K562 (cell line): ENCODE measurements at regions of chr6 and their contacts with region 1.

Region 1: DNA sequence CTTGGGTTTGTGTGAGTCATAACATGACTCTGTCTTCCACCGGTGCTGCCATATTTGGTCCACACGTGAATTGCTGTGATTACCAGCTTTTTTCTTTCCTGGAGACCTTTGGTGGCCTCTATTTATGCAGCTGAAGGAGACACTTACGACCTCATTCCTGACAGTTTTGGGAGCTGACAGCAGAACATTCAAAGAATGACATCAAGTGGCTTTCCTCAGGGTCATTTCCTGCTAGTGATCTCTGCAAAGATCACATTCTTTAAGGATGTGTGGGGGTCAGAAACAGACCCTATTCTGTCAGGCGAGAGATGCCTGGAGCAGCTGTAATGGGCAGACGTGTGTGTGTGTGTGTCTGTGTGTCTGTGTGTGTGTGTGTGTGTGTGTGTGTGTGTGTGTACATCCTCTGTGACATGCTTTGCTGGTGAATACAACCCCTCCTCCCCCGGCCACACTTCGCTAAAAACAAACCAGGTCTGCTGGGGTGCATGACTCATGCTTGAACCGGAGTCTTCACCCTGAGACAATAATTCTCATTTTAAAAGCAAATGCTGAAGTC is 115.6 kb downstream of the TMEM170B start:
- DNase-seq: peak in 3 of 4 experiments; percentile 24 to 33 (median 30)
- ATAC-seq: no peak; the same call in 2 of the 3 replicates
- H3K4me3 ChIP-seq: no peak overlapping the region
- H3K27ac ChIP-seq: no peak overlapping the region
- H3K4me1 ChIP-seq: no peaks in the 10 kb centered on the region
- H3K27me3 ChIP-seq: peaks cover 25 to 48% of the 10 kb centered on the region in 2 experiments
- CTCF ChIP-seq: no peak
- EP300 ChIP-seq: no peak
- POLR2A ChIP-seq: no peak
- RAD21 ChIP-seq: no peak

Region 2: DNA sequence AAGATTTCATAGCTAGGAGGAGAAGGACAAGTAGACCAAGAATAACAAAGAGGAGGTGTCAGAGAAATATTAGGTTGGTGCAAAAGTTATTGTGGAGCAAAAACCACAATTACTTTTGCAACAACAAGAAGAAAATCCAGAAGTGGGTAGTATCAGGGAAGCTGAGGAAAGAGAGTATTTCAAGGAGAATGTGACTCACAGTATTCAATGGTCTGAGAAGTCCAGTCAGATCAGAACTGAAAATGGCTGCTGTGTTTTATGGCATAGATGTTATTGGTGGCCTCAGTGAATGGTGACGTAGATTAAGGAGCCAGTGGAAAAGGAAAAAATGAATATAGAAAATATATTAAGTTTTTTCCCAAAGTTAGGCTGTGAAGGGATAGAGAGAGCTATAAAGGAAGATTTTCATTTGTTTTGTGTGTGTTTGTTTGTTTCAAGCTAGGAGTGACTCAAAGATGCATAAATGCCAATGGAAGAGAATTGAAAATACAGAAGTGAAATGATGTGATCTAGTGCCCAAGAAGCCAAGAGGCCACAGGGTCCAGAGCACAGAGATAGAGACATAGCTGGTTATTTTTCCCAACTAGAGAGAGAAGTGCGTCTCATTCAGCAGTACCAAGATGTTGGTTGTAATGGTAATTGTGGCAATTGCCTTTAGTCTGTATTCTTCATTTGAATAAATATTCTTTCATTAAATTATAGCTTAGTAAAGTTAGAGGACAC is 12.7 kb after region 1 on chr6:
- CTCF ChIA-PET with region 1: no interaction called
- POLR2A ChIA-PET with region 1: interaction called, 12 read pairs
- in situ Hi-C with region 1: no loop called
- intact Hi-C with region 1: no loop called
- DNase-seq: no peak
- ATAC-seq: no peak
- H3K4me3 ChIP-seq: no peak overlapping the region
- H3K27ac ChIP-seq: no peak overlapping the region
- H3K4me1 ChIP-seq: no peaks in the 10 kb centered on the region
- H3K27me3 ChIP-seq: peaks cover 5% of the 10 kb centered on the region in 2 experiments; a peak in 4 of 5 replicates
- CTCF ChIP-seq: no peak
- EP300 ChIP-seq: no peak
- POLR2A ChIP-seq: no peak
- RAD21 ChIP-seq: no peak

Region 3: GRCh38 chr6:11744753-11745152 is 91.6 kb after region 1 on chr6:
- CTCF ChIA-PET with region 1: no interaction called
- POLR2A ChIA-PET with region 1: no interaction called
- in situ Hi-C with region 1: no loop called
- intact Hi-C with region 1: no loop called
- DNase-seq: no peak
- ATAC-seq: no peak
- H3K4me3 ChIP-seq: no peak overlapping the region
- H3K27ac ChIP-seq: no peak overlapping the region
- H3K4me1 ChIP-seq: peaks cover 0 to 3% of the 10 kb centered on the region in 2 experiments; a peak in 2 of 5 replicates
- H3K27me3 ChIP-seq: no peaks in the 10 kb centered on the region
- CTCF ChIP-seq: no peak
- EP300 ChIP-seq: no peak
- POLR2A ChIP-seq: no peak
- RAD21 ChIP-seq: no peak

Region 4: DNA sequence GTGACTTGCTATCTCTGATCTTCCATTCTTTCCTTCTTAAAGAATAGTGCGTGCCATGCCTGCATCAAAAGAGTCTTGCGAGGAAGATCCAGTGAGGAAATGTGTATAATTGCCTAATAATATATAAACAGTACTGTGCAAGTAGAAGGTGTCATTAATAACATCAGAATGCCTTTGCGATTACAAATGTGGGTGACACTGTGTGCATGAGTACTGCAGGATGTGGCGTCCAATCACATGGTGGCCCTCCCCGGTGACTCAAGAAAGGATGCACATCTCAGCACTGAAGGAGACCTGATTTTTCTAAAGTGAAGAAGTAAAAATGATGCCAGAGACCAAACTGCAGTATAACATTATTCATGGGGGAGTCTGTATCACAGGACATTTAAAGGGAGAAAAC is 529.6 kb after region 1 on chr6:
- CTCF ChIA-PET with region 1: interaction called, 4 read pairs
- POLR2A ChIA-PET with region 1: no interaction called
- in situ Hi-C with region 1: no loop called
- intact Hi-C with region 1: loop called (anchors 5 kb)
- DNase-seq: no peak
- ATAC-seq: peak; percentile 56; the same call in 2 of the 3 replicates
- H3K4me3 ChIP-seq: no peak overlapping the region
- H3K27ac ChIP-seq: no peak overlapping the region
- H3K4me1 ChIP-seq: no peaks in the 10 kb centered on the region
- H3K27me3 ChIP-seq: peaks cover 0 to 7% of the 10 kb centered on the region in 2 experiments; a peak in 3 of 5 replicates
- CTCF ChIP-seq: no peak
- EP300 ChIP-seq: no peak
- POLR2A ChIP-seq: no peak
- RAD21 ChIP-seq: no peak

Region 5: GRCh38 chr6:12289933-12290820 is 637.1 kb after region 1 on chr6 and contains the start of gene EDN1:
- CTCF ChIA-PET with region 1: interaction called, 15 read pairs
- POLR2A ChIA-PET with region 1: interaction called, 4 read pairs
- in situ Hi-C with region 1: loop called (anchors 5 kb)
- intact Hi-C with region 1: loop called (anchors 1 kb)
- DNase-seq: peak; percentile 24 to 47 (median 32)
- ATAC-seq: peak; percentile 87
- H3K4me3 ChIP-seq: no peak within 1 kb of the TSS
- H3K27ac ChIP-seq: no peak within 1 kb of the TSS
- H3K4me1 ChIP-seq: peaks cover 0 to 10% of the 10 kb centered on the region in 2 experiments; a peak in 2 of 5 replicates
- H3K27me3 ChIP-seq: peaks cover 24 to 37% of the 10 kb centered on the region in 2 experiments
- CTCF ChIP-seq: peak in 2 of 3 experiments; percentile 24 to 40; a peak in 2 of 6 replicates
- EP300 ChIP-seq: no peak
- POLR2A ChIP-seq: no peak
- RAD21 ChIP-seq: 0 out of 4 replicates have a peak, but pooled peaks of 1 of the 2 experiments have one; percentile 19
- polyA plus RNA-seq, gene EDN1: not detected